H1 (cell line): ENCODE measurements at regions of chr5 and their contacts with region 1.

Region 1: DNA sequence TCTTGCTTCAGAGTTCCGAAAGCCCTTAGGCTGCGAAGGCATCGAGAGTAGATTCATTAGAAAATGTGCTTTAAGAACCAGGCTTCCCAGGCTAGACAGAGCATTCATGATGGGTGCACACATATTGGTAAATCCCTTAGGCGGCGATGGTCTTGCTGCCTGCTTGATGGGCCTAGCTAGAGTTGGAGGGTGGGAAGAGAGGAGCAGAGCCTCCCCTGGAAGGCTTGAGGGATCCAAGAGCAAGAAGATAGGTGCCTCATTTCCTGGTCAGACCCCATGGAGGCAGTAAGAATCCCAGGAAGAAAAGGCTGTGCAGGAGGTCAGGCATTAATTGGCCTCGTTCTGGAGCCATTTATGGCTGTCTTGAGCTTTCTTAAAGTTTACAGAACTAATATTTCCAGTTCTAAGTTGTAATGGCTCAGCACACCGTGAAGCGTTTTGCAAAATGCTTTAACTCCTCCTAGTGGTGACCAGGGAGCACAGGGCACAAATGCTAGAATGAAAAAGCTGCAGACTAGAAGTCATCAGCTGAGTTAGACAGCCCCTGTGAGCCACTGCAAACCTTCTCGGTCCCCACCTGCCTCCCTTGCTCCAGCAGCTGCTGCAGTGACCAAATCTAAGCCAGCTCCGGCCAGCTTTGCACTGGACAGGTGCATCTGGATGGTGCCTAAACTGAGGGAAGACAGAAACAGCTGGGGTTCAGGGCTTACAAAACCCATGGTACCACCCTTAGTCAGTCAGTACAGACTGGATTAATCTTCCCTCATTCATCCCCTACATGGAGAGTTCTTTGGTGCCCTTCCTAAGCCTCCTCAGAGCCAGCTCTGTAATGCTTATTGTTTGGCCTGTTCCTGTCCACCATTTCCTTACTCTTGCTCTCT is 14.7 kb downstream of the SLC45A2 start:
- DNase-seq: no peak
- H3K4me3 ChIP-seq: no peak overlapping the region
- H3K27ac ChIP-seq: no peak overlapping the region
- H3K4me1 ChIP-seq: no peaks in the 10 kb centered on the region
- H3K27me3 ChIP-seq: no peaks in the 10 kb centered on the region
- CTCF ChIP-seq: peak in 2 of 3 experiments; percentile 74 to 84; a peak in 3 of 4 replicates
- EP300 ChIP-seq: no peak
- POLR2A ChIP-seq: no peak
- RAD21 ChIP-seq: peak; percentile 90 to 91

Region 2: GRCh38 chr5:33588654-33589372 is 381.0 kb before region 1 on chr5:
- CTCF ChIA-PET with region 1: interaction called, 19 read pairs
- POLR2A ChIA-PET with region 1: no interaction called
- DNase-seq: peak; percentile 51 to 89
- H3K4me3 ChIP-seq: no peak overlapping the region
- H3K27ac ChIP-seq: no peak overlapping the region
- H3K4me1 ChIP-seq: peaks cover 0 to 3% (median 0%) of the 10 kb centered on the region in 4 experiments; a peak in 2 of 7 replicates
- H3K27me3 ChIP-seq: no peaks in the 10 kb centered on the region
- CTCF ChIP-seq: peak; percentile 85 to 99 (median 98)
- EP300 ChIP-seq: no peak
- POLR2A ChIP-seq: no peak
- RAD21 ChIP-seq: peak; percentile 79 to 87

Region 3: GRCh38 chr5:33867241-33867640 is 102.6 kb before region 1 on chr5:
- CTCF ChIA-PET with region 1: no interaction called
- POLR2A ChIA-PET with region 1: no interaction called
- DNase-seq: no peak
- H3K4me3 ChIP-seq: no peak overlapping the region
- H3K27ac ChIP-seq: no peak overlapping the region
- H3K4me1 ChIP-seq: no peaks in the 10 kb centered on the region
- H3K27me3 ChIP-seq: no peaks in the 10 kb centered on the region
- CTCF ChIP-seq: no peak
- EP300 ChIP-seq: no peak
- POLR2A ChIP-seq: no peak
- RAD21 ChIP-seq: no peak

Region 4: GRCh38 chr5:33877449-33877848 is 92.4 kb before region 1 on chr5:
- CTCF ChIA-PET with region 1: no interaction called
- POLR2A ChIA-PET with region 1: no interaction called
- DNase-seq: no peak
- H3K4me3 ChIP-seq: no peak overlapping the region
- H3K27ac ChIP-seq: no peak overlapping the region
- H3K4me1 ChIP-seq: peaks cover 0 to 3% (median 0%) of the 10 kb centered on the region in 4 experiments; a peak in 2 of 7 replicates
- H3K27me3 ChIP-seq: no peaks in the 10 kb centered on the region
- CTCF ChIP-seq: no peak
- EP300 ChIP-seq: no peak
- POLR2A ChIP-seq: no peak
- RAD21 ChIP-seq: no peak

Region 5: GRCh38 chr5:33936004-33936380 is 33.8 kb before region 1 on chr5:
- CTCF ChIA-PET with region 1: interaction called, 30 read pairs
- POLR2A ChIA-PET with region 1: no interaction called
- DNase-seq: peak in 1 of 2 experiments; percentile 94
- H3K4me3 ChIP-seq: peak overlapping the region; percentile 45 to 71 (median 66)
- H3K27ac ChIP-seq: no peak overlapping the region
- H3K4me1 ChIP-seq: peaks cover 2 to 5% (median 3%) of the 10 kb centered on the region in 4 experiments; a peak in 5 of 7 replicates
- H3K27me3 ChIP-seq: peaks cover 0 to 17% (median 13%) of the 10 kb centered on the region in 4 experiments; a peak in 5 of 7 replicates
- CTCF ChIP-seq: peak in 1 of 3 experiments; percentile 21; a peak in 1 of 4 replicates
- EP300 ChIP-seq: no peak
- POLR2A ChIP-seq: no peak
- RAD21 ChIP-seq: peak; percentile 21 to 39; a peak in 1 of 4 replicates

Region 6: GRCh38 chr5:33958176-33958575 is 11.6 kb before region 1 on chr5:
- CTCF ChIA-PET with region 1: interaction called, 46 read pairs
- POLR2A ChIA-PET with region 1: interaction called, 3 read pairs
- DNase-seq: no peak
- H3K4me3 ChIP-seq: no peak overlapping the region
- H3K27ac ChIP-seq: no peak overlapping the region
- H3K4me1 ChIP-seq: peaks cover 0 to 10% (median 2%) of the 10 kb centered on the region in 4 experiments; a peak in 2 of 7 replicates
- H3K27me3 ChIP-seq: 0 out of 7 replicates have a peak, but pooled peaks cover 0 to 2% (median 0%) of the 10 kb centered on the region in 4 experiments
- CTCF ChIP-seq: no peak
- EP300 ChIP-seq: no peak
- POLR2A ChIP-seq: no peak
- RAD21 ChIP-seq: no peak

Region 7: GRCh38 chr5:33997331-33997983 is 27.6 kb after region 1 on chr5:
- CTCF ChIA-PET with region 1: interaction called, 17 read pairs
- POLR2A ChIA-PET with region 1: interaction called, 3 read pairs
- DNase-seq: no peak
- H3K4me3 ChIP-seq: no peak overlapping the region
- H3K27ac ChIP-seq: no peak overlapping the region
- H3K4me1 ChIP-seq: peaks cover 0 to 3% (median 1%) of the 10 kb centered on the region in 4 experiments; a peak in 2 of 7 replicates
- H3K27me3 ChIP-seq: no peaks in the 10 kb centered on the region
- CTCF ChIP-seq: peak; percentile 1 to 69 (median 61)
- EP300 ChIP-seq: no peak
- POLR2A ChIP-seq: no peak
- RAD21 ChIP-seq: peak; percentile 63 to 74

Region 8: DNA sequence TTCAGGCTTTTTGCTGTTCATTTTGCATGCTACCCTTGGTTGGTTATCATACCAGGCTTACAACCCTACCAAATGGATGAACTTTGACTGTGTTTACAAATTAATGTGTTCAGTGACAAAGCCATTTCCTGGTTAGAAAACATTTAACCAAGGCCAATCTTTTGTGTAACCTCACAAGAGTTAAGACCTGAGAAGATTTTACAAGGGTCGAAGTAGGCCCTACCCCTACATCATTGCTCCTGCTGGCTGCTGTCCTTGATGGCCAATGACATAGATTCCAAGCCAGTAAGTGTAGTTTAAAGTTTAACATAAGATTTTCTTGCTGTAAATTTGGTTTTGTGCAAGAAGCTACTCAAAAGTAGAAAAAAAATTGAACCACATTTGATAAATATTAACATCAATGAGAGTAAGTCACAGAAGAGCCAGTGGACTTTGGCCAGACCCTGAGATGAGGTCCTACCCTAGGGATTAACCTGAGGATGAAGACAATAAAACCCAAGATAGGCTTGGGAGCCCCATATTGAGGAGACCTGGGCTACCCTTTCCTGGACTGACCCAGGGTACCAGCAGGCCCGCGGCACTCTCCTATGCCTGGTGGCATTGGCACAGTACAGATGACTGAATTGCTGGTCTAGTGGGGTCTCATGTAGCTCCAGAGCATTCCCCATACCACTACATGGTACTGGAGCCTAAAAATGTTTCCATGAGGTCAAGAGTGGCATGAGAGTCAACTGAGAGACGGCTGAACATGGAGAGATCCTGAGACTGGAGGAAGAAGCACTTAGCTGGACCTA is 64.9 kb after region 1 on chr5:
- CTCF ChIA-PET with region 1: no interaction called
- POLR2A ChIA-PET with region 1: no interaction called
- DNase-seq: no peak
- H3K4me3 ChIP-seq: no peak overlapping the region
- H3K27ac ChIP-seq: no peak overlapping the region
- H3K4me1 ChIP-seq: no peaks in the 10 kb centered on the region
- H3K27me3 ChIP-seq: no peaks in the 10 kb centered on the region
- CTCF ChIP-seq: no peak
- EP300 ChIP-seq: no peak
- POLR2A ChIP-seq: no peak
- RAD21 ChIP-seq: no peak